ENCODE measurements at regions of chr1 and their contacts with region 1.

Region 1: GRCh38 chr1:109493805-109494539 is at the start of gene CYB561D1:
- DNase-seq: peak; percentile 93
- ATAC-seq: peak; percentile 92
- total RNA-seq, gene CYB561D1: 4.3 TPM

Region 2: GRCh38 chr1:109423498-109423897 is 70.5 kb before region 1 on chr1:
- intact Hi-C with region 1: no loop called
- DNase-seq: no peak
- ATAC-seq: no peak

Region 3: DNA sequence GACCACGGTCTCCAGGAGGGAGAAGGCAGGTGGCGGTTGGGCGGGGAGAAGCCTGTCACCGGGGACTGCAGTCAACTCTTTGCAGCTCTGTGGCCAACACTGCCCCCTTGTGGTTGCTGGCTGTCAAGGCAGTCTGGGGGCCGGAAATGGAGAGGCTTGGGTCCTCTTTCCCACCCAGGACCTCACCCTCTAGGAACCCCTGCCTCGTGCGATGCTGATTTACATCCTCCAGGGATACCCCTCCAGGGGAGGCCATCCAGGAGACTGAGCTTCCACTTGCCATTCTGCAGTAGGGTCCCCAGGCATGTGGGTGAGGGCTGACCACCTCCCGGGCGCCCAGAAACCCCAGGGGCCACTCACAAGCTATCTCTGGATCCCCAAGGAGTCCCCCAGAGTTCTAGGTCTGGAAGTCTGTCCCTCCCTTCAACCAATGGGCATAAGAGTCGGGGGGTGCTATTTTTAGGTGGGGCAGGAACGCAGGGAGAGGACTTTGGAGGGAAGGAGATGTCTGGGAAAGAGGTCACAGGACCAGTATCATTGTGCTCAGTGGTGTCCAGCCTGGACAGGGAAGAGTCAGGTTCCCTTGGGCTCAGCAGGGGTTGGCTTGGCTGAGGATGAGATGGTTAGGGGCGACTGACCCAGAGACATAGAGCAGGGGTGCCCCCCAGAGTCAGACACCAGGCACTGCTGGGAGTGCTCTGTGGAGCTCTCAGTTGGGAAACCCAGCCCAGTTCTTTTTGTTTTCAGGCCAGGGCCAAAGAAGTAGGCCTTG is 38.6 kb after region 1 on chr1:
- intact Hi-C with region 1: loop called (anchors 5 kb)
- DNase-seq: peak; percentile 85
- ATAC-seq: peak; percentile 78

Measured in left ventricle myocardium superior (tissue), 1 donor.